AG04449 (cell line): ENCODE measurements at regions of chr6 and their contacts with region 1.

Region 1: DNA sequence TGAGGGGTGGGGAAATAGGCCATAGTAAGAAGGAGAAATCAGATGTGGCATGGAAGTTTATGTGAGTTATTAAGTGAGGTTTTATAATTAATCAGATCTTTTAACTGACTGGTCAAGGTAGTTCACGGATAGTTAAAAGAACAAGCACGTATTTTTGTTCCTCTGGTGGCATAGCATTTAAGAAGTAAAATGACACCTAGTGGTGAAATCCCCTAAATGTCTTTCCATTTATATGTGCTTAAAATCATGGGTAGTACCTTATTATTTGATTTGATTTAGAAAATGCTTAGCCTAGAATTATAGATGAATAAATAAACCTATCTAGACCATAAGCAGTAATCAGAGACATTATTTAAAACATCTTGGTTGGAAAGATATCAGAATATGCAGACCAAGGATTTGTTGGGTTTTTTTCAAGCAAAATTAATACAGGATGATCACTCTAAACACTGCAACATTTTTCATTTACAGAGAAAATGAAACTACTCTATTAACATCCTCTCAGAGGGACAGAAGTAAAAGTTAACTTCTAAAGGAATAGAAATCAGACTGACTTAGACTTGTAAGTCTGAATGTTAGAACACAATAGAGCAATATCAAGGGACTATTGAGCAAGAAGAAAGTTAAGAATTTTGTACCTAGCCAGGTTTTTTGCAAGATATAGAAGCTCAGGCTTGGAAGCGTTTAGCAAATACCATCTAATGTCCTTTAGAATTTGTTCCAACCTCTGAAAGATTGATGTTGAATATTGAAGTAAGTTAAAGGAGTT is 81.1 kb downstream of the STXBP5 start:
- DNase-seq: no peak
- H3K4me3 ChIP-seq: no peak overlapping the region
- CTCF ChIP-seq: no peak

Region 2: GRCh38 chr6:146901940-146902816 is 383.1 kb before region 1 on chr6:
- CTCF ChIA-PET with region 1: interaction called, 38 read pairs
- POLR2A ChIA-PET with region 1: no interaction called
- DNase-seq: no peak
- H3K4me3 ChIP-seq: no peak overlapping the region
- CTCF ChIP-seq: peak; percentile 16

Region 3: DNA sequence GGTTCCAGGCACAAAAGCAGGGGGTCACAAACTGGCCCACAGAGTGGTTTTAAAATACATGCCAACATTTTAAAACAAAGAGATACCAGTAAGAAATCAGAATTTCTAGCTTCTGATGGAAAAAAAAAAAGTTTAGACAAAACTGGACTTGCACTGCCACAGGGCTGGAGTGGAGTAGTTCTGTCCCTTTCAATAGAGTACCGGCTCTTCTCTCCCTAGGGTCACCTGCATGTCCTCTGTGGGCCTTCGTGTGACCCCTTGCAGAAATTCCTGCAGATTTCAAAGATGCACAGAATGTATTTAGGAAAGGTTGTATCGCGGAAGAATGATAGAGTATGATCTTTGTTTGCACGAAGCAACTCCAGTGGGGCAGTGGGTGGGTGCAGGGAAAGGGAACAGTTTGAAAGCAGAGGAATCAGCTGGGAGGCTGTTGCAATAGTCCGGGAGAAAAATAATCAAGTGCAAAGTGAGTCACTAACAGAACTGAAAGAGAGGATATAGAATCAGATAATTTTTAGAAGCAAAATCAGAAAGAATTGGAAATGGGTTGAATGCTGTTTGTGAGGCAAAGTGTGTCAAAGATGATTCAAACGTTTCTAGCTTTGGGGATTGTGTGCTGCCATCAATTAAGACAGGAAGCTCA is 178.4 kb before region 1 on chr6:
- CTCF ChIA-PET with region 1: no interaction called
- POLR2A ChIA-PET with region 1: no interaction called
- DNase-seq: peak; percentile 29
- H3K4me3 ChIP-seq: no peak overlapping the region
- CTCF ChIP-seq: no peak

Region 4: GRCh38 chr6:147274053-147274452 is 11.2 kb before region 1 on chr6:
- CTCF ChIA-PET with region 1: interaction called, 14 read pairs
- POLR2A ChIA-PET with region 1: no interaction called
- DNase-seq: no peak
- H3K4me3 ChIP-seq: no peak overlapping the region
- CTCF ChIP-seq: no peak

Region 5: DNA sequence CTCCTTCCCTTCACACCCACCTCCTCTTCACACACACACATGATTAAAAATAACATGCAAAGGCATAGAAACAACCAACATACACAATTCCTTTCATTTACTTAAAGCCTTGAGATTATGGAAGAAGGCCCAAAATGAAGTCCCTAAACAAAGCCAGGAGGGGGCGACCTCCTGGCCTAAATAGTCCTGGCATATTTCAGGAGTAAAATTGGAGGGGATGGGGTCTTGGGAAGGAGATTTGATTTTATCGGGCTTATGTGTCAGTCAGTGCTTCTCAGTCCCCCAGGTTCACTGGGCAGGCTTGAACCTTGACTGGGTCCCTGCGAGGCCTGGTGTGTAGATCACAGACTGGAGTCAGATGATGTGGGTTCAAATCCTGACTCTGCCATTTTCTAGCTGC is 489.6 kb after region 1 on chr6:
- CTCF ChIA-PET with region 1: no interaction called
- POLR2A ChIA-PET with region 1: no interaction called
- DNase-seq: no peak
- H3K4me3 ChIP-seq: no peak overlapping the region
- CTCF ChIP-seq: no peak